CD8-positive, alpha-beta T cell (primary cell): ENCODE measurements at regions of chrX and their contacts with region 1.

Region 1: GRCh38 chrX:25175743-25176142 is 160.0 kb upstream of the ARX start:
- DNase-seq: no peak
- ATAC-seq: no peak
- H3K4me3 ChIP-seq: no peak overlapping the region
- H3K4me3 Mint-ChIP-seq: no peak overlapping the region
- H3K27ac ChIP-seq: no peak overlapping the region
- H3K27ac Mint-ChIP-seq: no peak overlapping the region
- H3K4me1 ChIP-seq: no peaks in the 10 kb centered on the region
- H3K4me1 Mint-ChIP-seq: no peaks in the 10 kb centered on the region
- H3K27me3 ChIP-seq: no peaks in the 10 kb centered on the region
- H3K27me3 Mint-ChIP-seq: peaks cover 5% of the 10 kb centered on the region
- CTCF ChIP-seq: no peak

Region 2: GRCh38 chrX:23246001-23246400 is 1929.7 kb before region 1 on chrX:
- CTCF ChIA-PET with region 1: no interaction called
- POLR2A ChIA-PET with region 1: no interaction called
- intact Hi-C with region 1: no loop called
- DNase-seq: no peak
- ATAC-seq: no peak
- H3K4me3 ChIP-seq: no peak overlapping the region
- H3K4me3 Mint-ChIP-seq: no peak overlapping the region
- H3K27ac ChIP-seq: no peak overlapping the region
- H3K27ac Mint-ChIP-seq: no peak overlapping the region
- H3K4me1 ChIP-seq: no peaks in the 10 kb centered on the region
- H3K4me1 Mint-ChIP-seq: no peaks in the 10 kb centered on the region
- H3K27me3 ChIP-seq: no peaks in the 10 kb centered on the region
- H3K27me3 Mint-ChIP-seq: no peaks in the 10 kb centered on the region
- CTCF ChIP-seq: no peak

Region 3: GRCh38 chrX:24956828-24957227 is 218.9 kb before region 1 on chrX:
- CTCF ChIA-PET with region 1: no interaction called
- POLR2A ChIA-PET with region 1: no interaction called
- intact Hi-C with region 1: no loop called
- DNase-seq: no peak
- ATAC-seq: no peak
- H3K4me3 ChIP-seq: no peak overlapping the region
- H3K4me3 Mint-ChIP-seq: no peak overlapping the region
- H3K27ac ChIP-seq: no peak overlapping the region
- H3K27ac Mint-ChIP-seq: no peak overlapping the region
- H3K4me1 ChIP-seq: no peaks in the 10 kb centered on the region
- H3K4me1 Mint-ChIP-seq: no peaks in the 10 kb centered on the region
- H3K27me3 ChIP-seq: no peaks in the 10 kb centered on the region
- H3K27me3 Mint-ChIP-seq: no peaks in the 10 kb centered on the region
- CTCF ChIP-seq: no peak

Region 4: GRCh38 chrX:25226151-25226550 is 50.4 kb after region 1 on chrX:
- CTCF ChIA-PET with region 1: no interaction called
- POLR2A ChIA-PET with region 1: no interaction called
- intact Hi-C with region 1: loop called in 1 of 2 experiments (anchors 10 kb)
- DNase-seq: no peak
- ATAC-seq: no peak
- H3K4me3 ChIP-seq: no peak overlapping the region
- H3K4me3 Mint-ChIP-seq: no peak overlapping the region
- H3K27ac ChIP-seq: no peak overlapping the region
- H3K27ac Mint-ChIP-seq: no peak overlapping the region
- H3K4me1 ChIP-seq: no peaks in the 10 kb centered on the region
- H3K4me1 Mint-ChIP-seq: no peaks in the 10 kb centered on the region
- H3K27me3 ChIP-seq: no peaks in the 10 kb centered on the region
- H3K27me3 Mint-ChIP-seq: no peaks in the 10 kb centered on the region
- CTCF ChIP-seq: no peak